Naive thymus-derived CD4-positive, alpha-beta T cell (primary cell): ENCODE measurements at regions of chr14 and their contacts with region 1.

Region 1: GRCh38 chr14:34098045-34098984 is 147.4 kb upstream of the EGLN3 start:
- DNase-seq: peak in 2 of 9 donors; percentile 2 to 29
- ATAC-seq: no peak
- H3K4me3 ChIP-seq: no peak overlapping the region
- H3K4me3 Mint-ChIP-seq: peak overlapping the region in 1 of 10 donors; percentile 39
- H3K27ac ChIP-seq: no peak overlapping the region
- H3K27ac Mint-ChIP-seq: peak overlapping the region in 1 of 9 donors; percentile 40
- H3K4me1 ChIP-seq: no peaks in the 10 kb centered on the region
- H3K4me1 Mint-ChIP-seq: peaks cover 0 to 53% (median 7%) of the 10 kb centered on the region in 7 donors
- H3K27me3 ChIP-seq: no peaks in the 10 kb centered on the region
- H3K27me3 Mint-ChIP-seq: peaks cover 0 to 4% (median 0%) of the 10 kb centered on the region in 5 donors

Region 2: GRCh38 chr14:33839193-33840076 is 258.9 kb before region 1 on chr14:
- CTCF ChIA-PET with region 1: interaction called, 7 read pairs
- POLR2A ChIA-PET with region 1: no interaction called
- intact Hi-C with region 1: loop called in 1 of 2 experiments (anchors 1 kb)
- DNase-seq: peak in 8 of 9 donors; percentile 2 to 56 (median 30)
- ATAC-seq: peak; percentile 79
- H3K4me3 ChIP-seq: no peak overlapping the region
- H3K4me3 Mint-ChIP-seq: no peak overlapping the region
- H3K27ac ChIP-seq: no peak overlapping the region
- H3K27ac Mint-ChIP-seq: no peak overlapping the region
- H3K4me1 ChIP-seq: no peaks in the 10 kb centered on the region
- H3K4me1 Mint-ChIP-seq: peaks cover 0 to 48% (median 0%) of the 10 kb centered on the region in 7 donors
- H3K27me3 ChIP-seq: no peaks in the 10 kb centered on the region
- H3K27me3 Mint-ChIP-seq: peaks cover 0 to 8% (median 0%) of the 10 kb centered on the region in 5 donors

Region 3: GRCh38 chr14:34018564-34019244 is 79.6 kb before region 1 on chr14:
- CTCF ChIA-PET with region 1: no interaction called
- POLR2A ChIA-PET with region 1: no interaction called
- intact Hi-C with region 1: loop called in 1 of 2 experiments (anchors 2 kb)
- DNase-seq: peak in 5 of 9 donors; percentile 10 to 46 (median 19)
- ATAC-seq: peak; percentile 78
- H3K4me3 ChIP-seq: peak overlapping the region; percentile 45
- H3K4me3 Mint-ChIP-seq: peak overlapping the region; percentile 69 to 94 (median 84)
- H3K27ac ChIP-seq: peak overlapping the region; percentile 47
- H3K27ac Mint-ChIP-seq: peak overlapping the region; percentile 2 to 98 (median 95)
- H3K4me1 ChIP-seq: no peaks in the 10 kb centered on the region
- H3K4me1 Mint-ChIP-seq: peaks cover 6 to 40% (median 17%) of the 10 kb centered on the region in 7 donors
- H3K27me3 ChIP-seq: no peaks in the 10 kb centered on the region
- H3K27me3 Mint-ChIP-seq: peaks cover 0 to 8% (median 0%) of the 10 kb centered on the region in 5 donors

Region 4: DNA sequence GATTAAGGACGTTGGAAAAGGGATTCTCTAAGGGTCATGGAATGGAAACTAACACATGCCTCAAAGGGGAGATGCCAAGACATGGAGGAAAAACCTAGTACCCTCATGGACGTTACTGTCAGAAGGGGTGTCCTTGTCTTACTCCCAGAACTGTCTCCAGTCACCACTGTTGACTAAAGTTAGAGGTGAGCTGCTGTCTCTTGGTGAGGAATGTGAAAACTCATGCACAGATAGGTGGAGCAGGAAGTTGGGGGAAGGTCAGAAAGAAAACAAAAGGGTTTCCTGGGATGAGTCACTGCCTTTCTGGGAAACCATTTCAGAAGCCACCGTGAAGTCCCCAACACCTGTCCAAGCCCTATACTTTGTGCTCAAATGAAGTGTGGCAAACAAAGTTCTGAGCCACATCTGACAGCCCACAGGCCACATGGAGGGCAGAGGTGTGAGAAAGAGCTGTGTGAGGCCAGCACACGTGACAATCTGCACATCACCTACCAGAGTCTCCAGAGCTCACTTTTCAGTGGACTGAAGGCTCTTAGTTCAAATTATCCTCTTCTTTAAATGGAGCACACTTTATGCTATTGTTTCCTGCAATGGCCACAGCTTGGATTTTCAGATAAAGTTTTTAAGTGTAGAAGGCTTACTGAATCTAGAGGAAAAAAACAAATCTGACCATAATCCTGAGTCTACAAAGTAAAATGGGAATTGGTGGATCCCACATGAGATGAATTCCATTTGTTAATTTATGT is 54.5 kb before region 1 on chr14:
- CTCF ChIA-PET with region 1: no interaction called
- POLR2A ChIA-PET with region 1: no interaction called
- intact Hi-C with region 1: loop called in 1 of 2 experiments (anchors 5 kb)
- DNase-seq: peak in 1 of 9 donors; percentile 88
- ATAC-seq: peak; percentile 81
- H3K4me3 ChIP-seq: peak overlapping the region; percentile 35
- H3K4me3 Mint-ChIP-seq: peak overlapping the region in 6 of 10 donors; percentile 1 to 78 (median 20)
- H3K27ac ChIP-seq: no peak overlapping the region
- H3K27ac Mint-ChIP-seq: peak overlapping the region in 4 of 9 donors; percentile 46 to 93 (median 54)
- H3K4me1 ChIP-seq: peaks cover 6 to 7% of the 10 kb centered on the region in 2 donors
- H3K4me1 Mint-ChIP-seq: peaks cover 6 to 74% (median 36%) of the 10 kb centered on the region in 7 donors
- H3K27me3 ChIP-seq: no peaks in the 10 kb centered on the region
- H3K27me3 Mint-ChIP-seq: peaks cover 0 to 6% (median 0%) of the 10 kb centered on the region in 5 donors

Region 5: DNA sequence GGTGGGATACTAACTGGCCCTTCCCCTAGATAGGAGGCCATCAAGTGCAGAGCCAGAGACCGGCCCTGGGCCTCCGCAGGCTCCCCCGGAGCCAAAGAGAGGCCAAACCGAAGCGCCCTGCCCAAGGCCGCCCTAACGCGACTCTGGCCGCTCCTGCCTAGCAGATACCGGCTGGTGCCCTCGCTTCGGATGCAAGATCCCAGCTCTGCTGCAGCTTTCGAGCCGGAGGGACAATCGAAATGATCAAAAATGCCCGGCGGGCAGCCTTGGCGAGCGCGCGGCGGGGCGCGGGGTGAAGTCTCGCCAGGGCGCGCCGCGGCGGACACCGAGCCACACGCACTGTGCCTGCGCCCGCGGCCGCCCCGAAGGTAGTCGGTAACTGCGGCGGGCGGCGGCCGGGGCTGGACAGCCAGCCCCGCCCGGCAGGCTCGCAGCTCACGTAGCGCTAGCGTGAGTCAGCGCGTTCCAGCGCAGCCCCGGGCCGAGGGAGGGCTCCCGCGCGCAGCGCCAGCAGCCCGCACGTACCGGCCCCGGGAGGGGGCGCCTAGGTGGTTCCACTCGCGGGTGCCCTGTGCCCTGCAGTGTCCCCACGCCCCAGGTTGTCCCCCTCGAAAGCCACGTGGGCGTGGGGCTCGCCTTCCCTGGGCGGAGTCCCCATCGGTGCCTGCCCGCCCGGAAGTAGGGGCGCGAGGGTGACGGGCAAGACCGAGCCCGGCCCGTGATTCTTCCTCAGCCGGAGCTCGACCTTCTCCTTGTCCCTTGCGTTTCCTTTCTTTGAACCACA is 38.3 kb before region 1 on chr14:
- CTCF ChIA-PET with region 1: no interaction called
- POLR2A ChIA-PET with region 1: no interaction called
- intact Hi-C with region 1: loop called in 1 of 2 experiments (anchors 5 kb)
- DNase-seq: peak in 4 of 9 donors; percentile 5 to 77 (median 22)
- ATAC-seq: peak; percentile 95
- H3K4me3 ChIP-seq: peak overlapping the region; percentile 37
- H3K4me3 Mint-ChIP-seq: peak overlapping the region; percentile 77 to 90 (median 82)
- H3K27ac ChIP-seq: no peak overlapping the region
- H3K27ac Mint-ChIP-seq: peak overlapping the region in 1 of 9 donors; percentile 92
- H3K4me1 ChIP-seq: no peaks in the 10 kb centered on the region
- H3K4me1 Mint-ChIP-seq: peaks cover 0 to 52% (median 7%) of the 10 kb centered on the region in 7 donors
- H3K27me3 ChIP-seq: no peaks in the 10 kb centered on the region
- H3K27me3 Mint-ChIP-seq: peaks cover 9 to 15% (median 13%) of the 10 kb centered on the region in 5 donors

Region 6: GRCh38 chr14:34113005-34113511 is 14.7 kb after region 1 on chr14:
- CTCF ChIA-PET with region 1: no interaction called
- POLR2A ChIA-PET with region 1: no interaction called
- intact Hi-C with region 1: no loop called
- DNase-seq: no peak
- ATAC-seq: no peak
- H3K4me3 ChIP-seq: no peak overlapping the region
- H3K4me3 Mint-ChIP-seq: no peak overlapping the region
- H3K27ac ChIP-seq: no peak overlapping the region
- H3K27ac Mint-ChIP-seq: no peak overlapping the region
- H3K4me1 ChIP-seq: no peaks in the 10 kb centered on the region
- H3K4me1 Mint-ChIP-seq: peaks cover 0 to 5% (median 0%) of the 10 kb centered on the region in 7 donors
- H3K27me3 ChIP-seq: no peaks in the 10 kb centered on the region
- H3K27me3 Mint-ChIP-seq: peaks cover 0 to 44% (median 5%) of the 10 kb centered on the region in 5 donors